Naive thymus-derived CD4-positive, alpha-beta T cell (primary cell): ENCODE measurements at regions of chr22 and their contacts with region 1.

Region 1: GRCh38 chr22:49992921-49993648 is 19.5 kb downstream of the IL17REL start:
- DNase-seq: peak in 7 of 9 donors; percentile 46 to 69 (median 53)
- ATAC-seq: peak; percentile 93
- H3K4me3 ChIP-seq: no peak overlapping the region
- H3K4me3 Mint-ChIP-seq: peak overlapping the region in 4 of 10 donors; percentile 32 to 49 (median 37)
- H3K27ac ChIP-seq: no peak overlapping the region
- H3K27ac Mint-ChIP-seq: peak overlapping the region in 3 of 9 donors; percentile 11 to 63 (median 50)
- H3K4me1 ChIP-seq: peaks cover 6 to 8% of the 10 kb centered on the region in 2 donors
- H3K4me1 Mint-ChIP-seq: peaks cover 3 to 12% (median 6%) of the 10 kb centered on the region in 7 donors
- H3K27me3 ChIP-seq: no peaks in the 10 kb centered on the region
- H3K27me3 Mint-ChIP-seq: peaks cover 0 to 14% (median 0%) of the 10 kb centered on the region in 5 donors

Region 2: GRCh38 chr22:49930739-49931412 is 62.2 kb before region 1 on chr22:
- CTCF ChIA-PET with region 1: interaction called, 8 read pairs
- POLR2A ChIA-PET with region 1: interaction called, 3 read pairs
- intact Hi-C with region 1: loop called (anchors 1 kb)
- DNase-seq: peak in 7 of 9 donors; percentile 37 to 55 (median 44)
- ATAC-seq: peak; percentile 40
- H3K4me3 ChIP-seq: no peak overlapping the region
- H3K4me3 Mint-ChIP-seq: peak overlapping the region; percentile 34 to 83 (median 60)
- H3K27ac ChIP-seq: peak overlapping the region; percentile 37
- H3K27ac Mint-ChIP-seq: peak overlapping the region; percentile 79 to 92 (median 87)
- H3K4me1 ChIP-seq: peaks cover 10 to 28% of the 10 kb centered on the region in 2 donors
- H3K4me1 Mint-ChIP-seq: peaks cover 18 to 47% (median 39%) of the 10 kb centered on the region in 7 donors
- H3K27me3 ChIP-seq: no peaks in the 10 kb centered on the region
- H3K27me3 Mint-ChIP-seq: no peaks in the 10 kb centered on the region

Region 3: DNA sequence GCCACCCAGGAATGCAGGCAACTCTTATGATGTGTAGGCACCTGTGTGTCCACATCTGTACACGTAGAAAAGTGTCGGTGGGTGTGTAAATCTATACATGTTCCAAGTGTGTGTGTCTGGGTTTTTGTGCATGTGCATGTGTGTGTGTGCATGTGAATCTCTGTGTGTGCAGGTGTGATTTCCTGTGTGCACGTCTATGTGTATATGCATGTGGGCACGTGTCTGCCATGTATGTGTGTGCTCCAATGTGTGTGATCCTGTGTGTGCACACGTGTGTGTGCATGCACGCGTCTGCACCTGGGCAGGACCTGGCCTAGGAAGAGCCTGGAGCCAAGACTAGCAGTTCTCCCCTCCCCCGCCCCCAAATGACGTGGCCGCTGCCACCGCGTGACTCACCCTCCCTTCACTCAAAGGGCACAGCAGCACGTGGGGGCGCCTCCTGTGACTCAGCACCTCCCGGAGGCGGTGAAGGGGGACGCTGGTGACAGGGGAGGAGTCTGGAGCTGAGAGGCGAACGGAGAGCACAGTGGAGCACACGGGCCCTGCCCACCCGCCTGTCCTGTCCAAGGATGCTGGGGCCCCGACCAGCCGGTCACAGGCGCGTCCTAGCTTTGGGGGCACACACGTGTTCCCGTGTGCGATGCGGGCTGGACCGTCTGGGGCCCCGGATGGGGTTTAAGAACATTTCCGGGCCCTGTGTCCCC is 22.4 kb before region 1 on chr22:
- CTCF ChIA-PET with region 1: interaction called, 4 read pairs
- POLR2A ChIA-PET with region 1: no interaction called
- intact Hi-C with region 1: loop called in 1 of 2 experiments (anchors 2 kb)
- DNase-seq: peak; percentile 73 to 96 (median 81)
- ATAC-seq: peak; percentile 87
- H3K4me3 ChIP-seq: peak overlapping the region; percentile 53
- H3K4me3 Mint-ChIP-seq: peak overlapping the region; percentile 81 to 90 (median 84)
- H3K27ac ChIP-seq: peak overlapping the region; percentile 30
- H3K27ac Mint-ChIP-seq: peak overlapping the region; percentile 83 to 96 (median 92)
- H3K4me1 ChIP-seq: peaks cover 15 to 24% of the 10 kb centered on the region in 2 donors
- H3K4me1 Mint-ChIP-seq: peaks cover 12 to 38% (median 21%) of the 10 kb centered on the region in 7 donors
- H3K27me3 ChIP-seq: no peaks in the 10 kb centered on the region
- H3K27me3 Mint-ChIP-seq: no peaks in the 10 kb centered on the region

Region 4: DNA sequence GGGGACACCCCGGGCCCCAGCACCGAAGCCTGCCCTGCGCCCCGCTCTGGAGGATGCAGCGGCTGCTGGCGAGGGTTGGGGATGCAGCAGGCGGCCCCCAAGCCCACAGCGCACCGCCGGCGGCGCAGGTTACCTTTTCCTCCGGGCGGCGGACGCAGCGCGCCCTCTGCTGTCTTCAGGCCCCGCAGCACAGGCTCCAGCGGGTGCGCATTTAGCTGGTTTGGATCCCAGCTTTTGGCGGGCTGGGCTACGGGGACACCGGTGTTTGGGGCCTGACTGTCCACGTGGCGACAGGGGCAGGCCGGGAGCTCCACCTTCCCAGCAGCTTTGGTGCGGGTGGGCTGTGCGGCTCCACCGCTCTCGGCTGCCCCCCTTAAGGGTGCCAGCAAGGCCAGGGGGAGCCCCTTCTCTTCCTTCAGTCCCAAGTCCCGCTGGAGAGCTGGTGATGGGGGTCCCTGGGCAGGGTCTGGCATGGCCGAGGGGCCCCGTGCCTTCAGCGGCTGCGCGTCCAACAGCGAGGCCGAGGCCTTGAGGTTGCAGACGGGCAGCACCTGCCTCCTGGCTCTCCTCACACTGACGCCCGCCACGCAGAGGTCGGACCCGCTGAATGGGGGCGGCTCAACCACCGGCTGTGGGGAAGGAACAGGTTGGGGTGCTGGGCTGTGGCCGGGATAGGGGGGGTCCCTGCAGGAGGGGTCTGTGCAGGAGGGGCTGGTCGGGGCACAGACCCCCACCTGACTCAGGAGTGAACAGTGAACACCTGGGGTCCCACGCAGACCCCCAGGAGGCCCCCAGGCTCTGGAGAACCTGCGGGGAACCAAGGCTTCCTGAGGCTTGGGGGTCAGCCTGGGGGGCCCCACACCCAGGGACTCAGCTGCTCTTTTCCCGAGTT is 37.5 kb after region 1 on chr22:
- CTCF ChIA-PET with region 1: interaction called, 8 read pairs
- POLR2A ChIA-PET with region 1: no interaction called
- intact Hi-C with region 1: loop called (anchors 1 kb)
- DNase-seq: peak; percentile 65 to 84 (median 80)
- ATAC-seq: peak; percentile 95
- H3K4me3 ChIP-seq: no peak overlapping the region
- H3K4me3 Mint-ChIP-seq: peak overlapping the region in 1 of 10 donors; percentile 34
- H3K27ac ChIP-seq: no peak overlapping the region
- H3K27ac Mint-ChIP-seq: no peak overlapping the region
- H3K4me1 ChIP-seq: peaks cover 2 to 9% of the 10 kb centered on the region in 2 donors
- H3K4me1 Mint-ChIP-seq: peaks cover 0 to 12% (median 5%) of the 10 kb centered on the region in 7 donors
- H3K27me3 ChIP-seq: no peaks in the 10 kb centered on the region
- H3K27me3 Mint-ChIP-seq: peaks cover 0 to 27% (median 6%) of the 10 kb centered on the region in 5 donors

Region 5: DNA sequence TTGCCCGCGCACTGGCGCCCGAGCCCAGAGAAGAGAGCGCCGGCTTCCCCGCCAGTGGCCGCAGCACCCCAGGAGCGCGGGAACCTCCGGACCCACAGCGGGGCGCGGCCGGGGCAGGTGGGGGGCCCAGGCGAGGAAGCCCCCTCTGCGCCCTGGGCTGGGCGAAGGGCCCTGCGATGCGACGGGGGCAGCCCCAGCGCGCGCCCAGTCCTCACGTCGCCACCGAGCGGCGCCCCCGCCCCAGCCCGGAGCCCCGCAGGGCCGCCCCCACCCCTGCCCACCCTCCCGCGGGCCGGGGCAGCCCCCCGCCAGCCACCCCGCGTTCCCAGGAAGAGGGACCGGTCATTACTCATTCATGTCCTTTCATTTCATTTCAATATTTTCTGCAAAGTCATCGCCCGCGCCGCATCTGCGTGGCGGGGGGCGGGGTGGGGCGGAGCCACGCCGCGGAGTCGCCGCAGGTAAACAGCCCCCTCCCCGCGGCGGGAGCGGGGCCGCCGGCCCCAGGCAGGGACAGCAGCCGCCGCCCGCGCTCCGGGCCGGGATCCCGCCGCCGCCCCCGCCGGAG is 176.8 kb after region 1 on chr22:
- CTCF ChIA-PET with region 1: no interaction called
- POLR2A ChIA-PET with region 1: no interaction called
- intact Hi-C with region 1: loop called in 1 of 2 experiments (anchors 10 kb)
- DNase-seq: peak in 2 of 9 donors; percentile 18 to 69
- ATAC-seq: peak; percentile 68
- H3K4me3 ChIP-seq: no peak overlapping the region
- H3K4me3 Mint-ChIP-seq: peak overlapping the region in 6 of 10 donors; percentile 39 to 63 (median 47)
- H3K27ac ChIP-seq: no peak overlapping the region
- H3K27ac Mint-ChIP-seq: no peak overlapping the region
- H3K4me1 ChIP-seq: no peaks in the 10 kb centered on the region
- H3K4me1 Mint-ChIP-seq: peaks cover 0 to 6% (median 2%) of the 10 kb centered on the region in 7 donors
- H3K27me3 ChIP-seq: peaks cover 0 to 4% of the 10 kb centered on the region in 2 donors
- H3K27me3 Mint-ChIP-seq: peaks cover 20 to 48% (median 39%) of the 10 kb centered on the region in 5 donors